ENCODE measurements at regions of chr5 and their contacts with region 1.

Region 1: DNA sequence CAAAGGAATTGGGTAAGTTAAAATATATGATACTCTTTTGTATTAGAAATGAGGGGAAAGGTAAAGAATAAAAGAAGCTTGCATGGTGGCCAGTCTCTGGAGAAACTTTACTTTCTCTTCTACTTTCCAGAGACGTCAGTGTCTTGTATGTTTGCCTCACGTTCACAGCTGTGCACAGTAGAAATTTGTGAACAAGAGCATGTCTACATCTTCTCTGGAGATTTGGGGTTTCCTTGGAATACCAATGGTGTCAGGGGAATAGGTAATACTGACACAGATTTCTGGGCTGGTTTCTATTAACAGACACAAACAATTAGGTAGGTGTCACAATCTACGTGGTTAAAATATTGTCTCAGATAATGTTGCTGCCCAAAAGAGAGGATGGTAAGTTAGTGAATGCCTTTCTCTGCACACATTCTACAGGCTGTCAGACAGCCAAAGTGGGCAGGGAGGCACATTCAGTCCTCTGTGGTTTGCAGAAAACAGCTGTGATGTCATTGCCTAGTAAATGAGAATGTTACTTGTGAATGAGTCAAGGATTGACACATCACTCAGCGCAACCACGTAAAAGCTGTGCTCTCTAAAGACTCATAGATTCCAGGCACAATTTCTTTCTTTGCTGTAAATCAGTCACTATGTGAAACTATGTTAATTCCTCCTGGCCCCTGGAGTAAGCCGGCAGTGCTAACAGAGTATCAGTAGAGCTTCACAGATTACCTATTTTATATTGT is 397.1 kb downstream of the MAN2A1 start:
- DNase-seq: peak; percentile 28 to 72
- ATAC-seq: peak; percentile 84 to 87
- H3K4me3 ChIP-seq: no peak overlapping the region
- H3K27ac ChIP-seq: peak overlapping the region; percentile 24 to 54 (median 34)
- H3K4me1 ChIP-seq: no peaks in the 10 kb centered on the region
- H3K27me3 ChIP-seq: peaks cover 0 to 6% (median 0%) of the 10 kb centered on the region in 3 donors
- CTCF ChIP-seq: no peak
- POLR2A ChIP-seq: peak in 1 of 2 donors; percentile 11

Region 2: GRCh38 chr5:109911731-109912130 is 175.1 kb before region 1 on chr5:
- in situ Hi-C with region 1: no loop called
- intact Hi-C with region 1: loop called (anchors 5 kb)
- DNase-seq: no peak
- ATAC-seq: peak; percentile 39 to 60
- H3K4me3 ChIP-seq: no peak overlapping the region
- H3K27ac ChIP-seq: no peak overlapping the region
- H3K4me1 ChIP-seq: no peaks in the 10 kb centered on the region
- H3K27me3 ChIP-seq: no peaks in the 10 kb centered on the region
- CTCF ChIP-seq: no peak
- POLR2A ChIP-seq: no peak